ENCODE measurements at regions of chrX and their contacts with region 1.

Region 1: DNA sequence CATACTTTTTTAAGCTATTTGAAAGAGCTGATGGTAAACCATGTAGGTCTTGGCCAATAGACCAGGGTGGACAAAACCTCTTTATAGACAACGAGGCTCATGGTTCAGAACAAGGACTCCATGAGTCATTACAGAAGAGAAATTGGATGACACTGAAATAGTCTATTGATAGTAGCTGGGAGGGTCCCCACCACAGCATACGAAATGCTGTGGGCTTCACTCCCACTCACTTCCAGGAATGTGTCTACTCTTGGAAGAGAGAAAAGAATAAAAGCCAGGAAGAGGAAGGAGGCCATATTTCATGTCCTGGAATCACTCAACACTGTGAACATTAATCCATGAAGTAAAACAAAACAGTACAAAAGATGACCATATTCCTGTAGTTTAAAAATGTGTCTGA is 82.3 kb upstream of the MXRA5 start:
- DNase-seq: no peak
- H3K4me3 ChIP-seq: no peak overlapping the region
- H3K27ac ChIP-seq: no peak overlapping the region
- H3K4me1 ChIP-seq: no peaks in the 10 kb centered on the region
- H3K27me3 ChIP-seq: no peaks in the 10 kb centered on the region
- CTCF ChIP-seq: no peak

Region 2: DNA sequence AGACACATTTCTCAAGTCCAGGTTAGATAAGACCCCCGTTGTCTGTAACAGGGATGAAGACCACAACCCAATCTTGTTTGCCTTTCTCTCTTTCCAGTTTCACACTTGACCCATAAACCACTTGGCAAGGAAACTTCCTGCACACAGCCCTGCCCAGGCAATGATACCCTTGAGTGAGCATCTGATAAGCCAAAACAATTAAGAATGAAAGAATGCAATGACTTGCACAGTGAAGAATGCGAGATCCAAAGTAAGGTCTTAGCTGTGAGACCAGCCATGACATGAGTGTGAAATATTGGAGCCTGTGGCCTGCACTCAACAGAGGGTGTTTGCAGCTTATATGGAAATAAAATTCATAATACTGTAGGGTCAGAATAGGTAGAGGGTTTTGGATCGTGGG is 44.5 kb before region 1 on chrX:
- CTCF ChIA-PET with region 1: no interaction called
- dilution Hi-C with region 1: no loop called
- in situ Hi-C with region 1: no loop called
- intact Hi-C with region 1: no loop called
- DNase-seq: peak; percentile 14
- H3K4me3 ChIP-seq: no peak overlapping the region
- H3K27ac ChIP-seq: no peak overlapping the region
- H3K4me1 ChIP-seq: no peaks in the 10 kb centered on the region
- H3K27me3 ChIP-seq: no peaks in the 10 kb centered on the region
- CTCF ChIP-seq: no peak

Region 3: DNA sequence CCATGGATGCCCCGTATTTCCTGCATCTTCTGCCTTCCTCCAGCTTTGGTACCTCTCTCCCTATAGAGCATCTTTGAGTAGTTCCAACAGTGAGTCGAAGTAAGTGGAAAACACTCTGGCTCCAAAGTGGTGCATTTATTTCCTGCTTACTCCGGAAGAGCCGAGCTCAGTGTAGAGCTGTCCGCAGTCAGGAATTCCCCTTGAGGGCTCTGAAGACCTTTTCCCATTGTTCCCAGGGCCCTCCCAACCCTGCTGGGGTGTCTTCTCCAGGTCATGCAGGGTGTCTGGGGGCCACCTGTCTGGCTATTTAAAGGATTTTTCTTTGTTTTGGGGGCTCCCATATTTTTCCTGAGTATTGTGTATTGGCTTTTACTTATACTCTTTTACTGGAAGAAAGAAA is 36.2 kb after region 1 on chrX:
- CTCF ChIA-PET with region 1: no interaction called
- dilution Hi-C with region 1: loop called (anchors 5 kb)
- in situ Hi-C with region 1: no loop called
- intact Hi-C with region 1: no loop called
- DNase-seq: no peak
- H3K4me3 ChIP-seq: no peak overlapping the region
- H3K27ac ChIP-seq: no peak overlapping the region
- H3K4me1 ChIP-seq: no peaks in the 10 kb centered on the region
- H3K27me3 ChIP-seq: peaks cover 5% of the 10 kb centered on the region
- CTCF ChIP-seq: no peak

Region 4: GRCh38 chrX:3659761-3660160 is 231.0 kb after region 1 on chrX:
- CTCF ChIA-PET with region 1: no interaction called
- dilution Hi-C with region 1: no loop called
- in situ Hi-C with region 1: no loop called
- intact Hi-C with region 1: no loop called
- DNase-seq: no peak
- H3K4me3 ChIP-seq: no peak overlapping the region
- H3K27ac ChIP-seq: no peak overlapping the region
- H3K4me1 ChIP-seq: no peaks in the 10 kb centered on the region
- H3K27me3 ChIP-seq: no peaks in the 10 kb centered on the region
- CTCF ChIP-seq: no peak

Region 5: DNA sequence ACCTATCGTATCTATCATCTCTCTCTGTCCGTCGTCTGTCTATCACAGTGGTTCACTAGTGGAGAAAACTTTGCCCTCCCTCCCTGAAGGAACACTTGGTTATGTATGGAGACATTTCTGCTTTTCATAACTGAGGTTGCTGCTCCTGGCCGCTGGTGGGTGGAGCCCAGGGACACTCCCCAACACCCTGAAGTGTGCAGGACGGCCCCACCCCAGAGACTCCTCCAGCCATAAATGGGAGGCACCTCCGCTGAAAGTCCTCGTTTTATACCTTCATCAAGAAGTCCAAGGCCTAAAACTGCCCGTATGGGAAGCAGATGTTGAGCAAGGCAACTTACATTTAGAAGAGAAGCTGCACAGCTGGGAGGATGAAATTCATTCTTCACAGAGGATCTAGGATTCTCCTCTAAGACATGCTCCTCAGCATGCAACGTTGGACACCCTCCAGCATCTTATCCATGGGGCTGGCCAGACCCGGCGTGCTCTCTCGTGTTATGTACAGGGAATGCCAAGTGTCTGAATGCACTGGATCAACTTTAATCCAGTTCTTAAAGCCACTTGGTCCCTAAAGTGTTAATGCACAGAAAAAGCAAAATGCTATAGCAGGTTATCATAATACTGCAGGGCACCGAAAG is 241.2 kb after region 1 on chrX:
- CTCF ChIA-PET with region 1: no interaction called
- dilution Hi-C with region 1: no loop called
- in situ Hi-C with region 1: no loop called
- intact Hi-C with region 1: no loop called
- DNase-seq: no peak
- H3K4me3 ChIP-seq: no peak overlapping the region
- H3K27ac ChIP-seq: no peak overlapping the region
- H3K4me1 ChIP-seq: no peaks in the 10 kb centered on the region
- H3K27me3 ChIP-seq: no peaks in the 10 kb centered on the region
- CTCF ChIP-seq: no peak

Measured in mammary epithelial cell (primary cell).